Calu3 (cell line): ENCODE measurements at regions of chr9 and their contacts with region 1.

Region 1: GRCh38 chr9:76744336-76744735 is 19.9 kb upstream of the PCA3 start:
- DNase-seq: no peak
- H3K4me3 Mint-ChIP-seq: no peak overlapping the region
- H3K27ac Mint-ChIP-seq: no peak overlapping the region
- H3K4me1 Mint-ChIP-seq: no peaks in the 10 kb centered on the region
- H3K27me3 Mint-ChIP-seq: peaks cover 39% of the 10 kb centered on the region
- CTCF ChIP-seq: no peak

Region 2: GRCh38 chr9:76107482-76107881 is 636.9 kb before region 1 on chr9:
- CTCF ChIA-PET with region 1: no interaction called
- intact Hi-C with region 1: no loop called
- DNase-seq: no peak
- H3K4me3 Mint-ChIP-seq: no peak overlapping the region
- H3K27ac Mint-ChIP-seq: no peak overlapping the region
- H3K4me1 Mint-ChIP-seq: no peaks in the 10 kb centered on the region
- H3K27me3 Mint-ChIP-seq: no peaks in the 10 kb centered on the region
- CTCF ChIP-seq: no peak

Region 3: GRCh38 chr9:76692458-76693129 is 51.7 kb before region 1 on chr9:
- CTCF ChIA-PET with region 1: interaction called, 16 read pairs
- intact Hi-C with region 1: no loop called
- DNase-seq: no peak
- H3K4me3 Mint-ChIP-seq: peak overlapping the region; percentile 69
- H3K27ac Mint-ChIP-seq: no peak overlapping the region
- H3K4me1 Mint-ChIP-seq: peaks cover 9% of the 10 kb centered on the region
- H3K27me3 Mint-ChIP-seq: peaks cover 73% of the 10 kb centered on the region
- CTCF ChIP-seq: no peak